GM10248 (cell line): ENCODE measurements at regions of chr15 and their contacts with region 1.

Region 1: GRCh38 chr15:37891766-37892368 is 42.6 kb upstream of the TMCO5A start:
- DNase-seq: no peak
- CTCF ChIP-seq: peak; percentile 66

Region 2: DNA sequence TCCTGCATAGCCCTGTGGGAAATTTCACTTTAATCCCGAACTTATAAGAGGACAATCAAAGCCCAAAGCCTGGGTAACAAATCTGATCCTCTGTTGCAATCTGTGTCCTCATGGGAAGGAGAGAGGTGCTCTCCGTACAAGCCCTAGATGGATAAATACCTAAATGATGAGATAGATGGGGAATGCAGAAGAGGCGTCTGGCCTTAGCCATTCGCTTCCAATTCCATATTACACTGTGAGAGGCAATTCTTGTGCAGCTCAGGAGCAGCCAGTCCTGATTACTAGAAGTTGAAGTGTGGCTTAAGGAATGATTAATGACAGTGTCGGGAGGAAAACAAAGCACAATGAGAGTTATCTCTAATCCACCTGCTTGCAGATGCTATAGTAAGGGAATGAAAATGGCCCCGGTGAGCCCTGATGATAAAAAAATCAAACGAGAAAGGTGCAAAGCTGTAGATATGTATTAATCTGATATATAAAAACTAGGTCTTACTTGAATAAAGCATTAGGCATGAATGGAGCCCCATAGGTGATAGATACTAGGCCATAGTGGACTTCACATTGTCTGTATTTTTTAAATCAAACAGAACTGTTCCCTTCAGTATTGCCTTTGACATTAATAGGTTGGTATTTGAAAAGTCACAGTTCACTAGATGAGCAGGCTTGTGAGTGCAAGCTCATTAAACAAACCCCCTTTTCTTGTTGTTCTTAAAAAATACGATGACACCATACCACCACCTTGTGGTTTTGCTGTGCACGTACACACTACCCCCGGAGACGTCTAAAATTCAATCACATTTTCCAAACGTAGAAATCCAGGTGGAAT is 11.6 kb before region 1 on chr15:
- CTCF ChIA-PET with region 1: interaction called, 40 read pairs
- POLR2A ChIA-PET with region 1: no interaction called
- DNase-seq: no peak
- CTCF ChIP-seq: peak; percentile 49

Region 3: GRCh38 chr15:37940876-37941275 is 49.0 kb after region 1 on chr15:
- CTCF ChIA-PET with region 1: no interaction called
- POLR2A ChIA-PET with region 1: no interaction called
- DNase-seq: no peak
- CTCF ChIP-seq: no peak